ENCODE measurements at regions of chr3 and their contacts with region 1.

Region 1: GRCh38 chr3:124559881-124560574 is 170.2 kb upstream of the UMPS start:
- DNase-seq: no peak

Region 2: GRCh38 chr3:123984350-123984749 is 575.7 kb before region 1 on chr3:
- intact Hi-C with region 1: no loop called
- DNase-seq: no peak

Region 3: DNA sequence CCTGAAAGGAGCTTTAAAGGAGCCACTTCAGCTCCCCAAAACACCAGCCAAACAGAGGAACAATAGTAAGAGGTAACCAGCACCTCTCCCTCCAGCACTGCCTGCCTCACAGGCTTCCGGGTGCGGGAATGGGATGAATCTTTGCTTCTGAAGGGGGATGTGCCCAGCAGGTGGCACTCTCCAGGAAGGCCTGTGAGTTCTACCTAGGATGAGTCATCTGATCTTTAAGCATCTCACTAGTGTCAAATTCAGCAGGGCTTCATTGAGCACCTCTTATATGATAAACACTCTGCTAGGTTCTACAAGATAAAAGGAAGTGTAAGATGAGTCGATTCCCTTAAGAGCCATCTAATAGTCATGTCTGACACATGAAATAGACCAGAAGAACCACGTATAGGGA is 67.2 kb before region 1 on chr3:
- intact Hi-C with region 1: loop called in 1 of 2 experiments (anchors 10 kb)
- DNase-seq: no peak

Region 4: DNA sequence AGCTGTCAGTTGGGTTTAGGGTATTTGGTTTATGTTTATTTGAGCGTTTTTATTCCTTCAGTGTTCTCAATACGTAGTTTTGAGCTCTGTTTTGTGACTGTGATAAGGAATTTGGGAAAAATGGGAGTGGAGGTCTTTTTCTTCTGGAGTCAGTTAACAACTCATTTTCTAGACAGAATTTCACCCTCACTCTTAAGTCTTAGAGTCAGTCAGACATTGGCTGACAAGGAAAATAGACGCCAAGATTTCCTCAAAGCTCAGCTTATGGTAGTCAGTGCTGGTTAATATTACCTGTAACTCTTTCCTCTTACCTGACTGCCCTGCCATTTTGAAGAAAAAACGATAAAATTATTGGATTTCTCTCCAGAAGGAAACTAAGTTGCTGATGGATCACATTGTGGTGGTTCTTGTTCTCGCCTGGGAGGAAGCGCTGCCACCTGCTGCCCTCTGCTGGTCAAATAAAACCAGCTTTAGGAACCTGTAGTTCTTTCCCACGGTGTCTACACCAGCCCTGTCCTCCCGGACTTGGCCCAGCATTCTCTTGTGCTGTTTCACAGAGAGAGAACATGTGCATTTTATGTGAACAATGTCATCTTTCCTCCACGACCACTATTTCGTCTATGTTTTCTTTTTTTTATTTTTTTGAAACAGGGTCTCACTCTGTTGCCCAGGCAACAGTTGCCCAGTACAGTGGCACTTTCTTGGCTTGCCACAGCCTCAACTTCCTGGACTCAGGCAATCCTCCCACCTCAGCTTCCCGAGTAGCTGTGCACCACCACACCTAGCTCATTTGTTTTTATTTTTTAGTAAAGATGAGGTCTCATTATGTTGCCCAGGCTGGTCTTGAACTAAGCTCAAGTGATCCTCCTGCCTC is 128.8 kb after region 1 on chr3:
- intact Hi-C with region 1: loop called (anchors 2 to 5 kb)
- DNase-seq: peak; percentile 92

Region 5: DNA sequence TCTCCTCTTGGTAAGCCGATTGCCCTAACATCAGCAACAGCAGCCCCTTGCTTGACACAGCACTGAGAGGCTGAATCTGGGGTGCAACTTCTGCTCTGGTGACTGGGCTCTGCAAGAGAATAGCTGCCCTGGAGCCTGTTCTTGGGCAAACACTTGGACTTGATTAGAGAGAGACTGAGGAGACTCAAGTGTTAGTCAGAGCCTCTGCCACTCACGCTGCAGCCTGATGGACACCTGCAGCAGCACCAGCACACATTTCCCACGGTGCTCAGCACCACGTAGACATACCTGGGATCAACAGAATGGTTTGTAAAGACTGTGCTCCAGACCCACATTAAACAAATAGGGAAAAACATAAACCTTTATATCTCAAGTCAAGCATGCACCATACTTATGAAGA is 134.5 kb after region 1 on chr3:
- intact Hi-C with region 1: loop called (anchors 2 to 5 kb)
- DNase-seq: no peak

Measured in posterior vena cava (tissue), 2 donors.